ENCODE measurements at regions of chr2 and their contacts with region 1.

Region 1: DNA sequence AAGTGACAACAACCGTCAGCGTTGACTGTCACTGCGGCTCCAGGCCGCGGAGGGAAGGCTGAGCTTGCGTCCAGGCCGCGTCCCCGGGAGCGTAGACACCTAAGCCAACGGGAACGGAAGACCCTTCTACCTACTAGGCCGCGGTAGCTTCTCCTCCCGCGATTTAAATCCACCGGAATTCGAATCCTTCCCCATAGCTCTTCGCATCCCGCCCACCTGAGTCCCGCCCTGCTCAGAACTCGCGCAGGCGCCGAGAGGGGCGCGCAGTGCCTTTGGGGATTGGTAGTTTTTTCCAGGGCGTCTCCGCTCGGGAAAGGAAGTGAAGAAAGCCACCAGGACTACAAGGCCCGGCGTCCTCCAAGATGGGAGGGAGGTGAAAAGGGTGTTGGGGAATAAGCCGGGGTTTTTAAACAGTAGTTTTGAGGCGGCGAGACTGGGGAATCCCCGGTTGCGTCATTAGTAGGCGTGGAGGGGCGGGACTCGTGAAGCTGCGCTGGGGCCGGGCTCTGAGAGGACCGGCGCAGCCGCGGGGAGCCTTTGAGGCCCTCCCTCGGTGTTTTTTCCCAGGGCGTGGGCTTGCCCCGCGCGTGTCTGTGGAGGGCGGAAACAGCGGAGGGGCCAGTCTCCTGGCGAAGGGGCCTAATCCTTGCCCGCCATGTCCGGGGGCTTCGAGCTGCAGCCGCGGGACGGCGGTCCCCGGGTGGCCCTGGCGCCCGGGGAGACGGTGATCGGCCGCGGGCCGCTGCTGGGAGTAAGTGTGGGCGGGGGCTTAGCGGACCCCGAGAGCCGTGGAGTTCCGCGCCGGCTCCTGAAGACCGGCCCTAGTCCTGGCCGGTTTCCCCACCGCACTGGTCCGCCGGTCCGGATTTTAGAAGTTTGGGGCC is at the starts of genes APLF and FBXO48:
- DNase-seq: peak; percentile 100
- H3K4me3 Mint-ChIP-seq: peak within 1 kb of the TSS; percentile 96
- H3K27ac Mint-ChIP-seq: peak within 1 kb of the TSS; percentile 93
- H3K4me1 Mint-ChIP-seq: peaks cover 44% of the 10 kb centered on the region
- H3K27me3 Mint-ChIP-seq: no peaks in the 10 kb centered on the region
- total RNA-seq, gene APLF: 2.0 and 2.1 TPM in 2 replicates
- total RNA-seq, gene FBXO48: 1.2 TPM in 2 replicates

Region 2: DNA sequence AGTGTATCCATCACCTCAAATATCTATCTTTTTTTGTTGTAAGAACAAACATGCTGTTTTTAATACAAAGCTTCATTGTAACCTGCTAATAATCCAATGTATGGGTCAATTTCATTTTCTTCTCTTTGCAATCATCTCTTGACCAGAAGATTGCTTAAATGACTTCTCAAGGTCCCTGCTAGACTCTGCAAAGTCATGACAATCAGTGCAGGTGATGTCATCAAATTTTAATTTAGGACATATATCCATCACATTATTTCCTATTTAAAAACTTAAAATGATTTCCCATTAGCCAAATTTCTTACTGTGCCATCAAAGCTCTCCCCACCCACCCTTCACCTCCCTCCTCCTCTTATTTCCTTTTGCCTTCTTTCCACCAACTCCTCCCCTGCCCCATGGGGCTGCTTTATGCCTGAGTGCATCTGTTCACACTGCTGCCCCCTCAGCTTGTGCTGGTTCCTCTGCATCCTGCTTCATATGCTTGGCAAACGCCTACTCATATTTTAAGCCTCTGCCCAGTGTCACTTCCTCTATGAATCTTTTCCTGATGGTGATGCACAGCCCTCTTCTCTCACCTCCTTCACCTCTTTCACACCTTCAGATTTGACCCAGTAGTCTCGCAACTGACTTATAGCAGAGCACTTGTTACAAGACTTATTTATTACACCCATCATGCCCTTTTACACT is 82.0 kb before region 1 on chr2:
- intact Hi-C with region 1: loop called (anchors 1 kb)
- DNase-seq: peak; percentile 63
- H3K4me3 Mint-ChIP-seq: peak overlapping the region; percentile 10
- H3K27ac Mint-ChIP-seq: peak overlapping the region; percentile 45
- H3K4me1 Mint-ChIP-seq: peaks cover 38% of the 10 kb centered on the region
- H3K27me3 Mint-ChIP-seq: peaks cover 12% of the 10 kb centered on the region

Region 3: DNA sequence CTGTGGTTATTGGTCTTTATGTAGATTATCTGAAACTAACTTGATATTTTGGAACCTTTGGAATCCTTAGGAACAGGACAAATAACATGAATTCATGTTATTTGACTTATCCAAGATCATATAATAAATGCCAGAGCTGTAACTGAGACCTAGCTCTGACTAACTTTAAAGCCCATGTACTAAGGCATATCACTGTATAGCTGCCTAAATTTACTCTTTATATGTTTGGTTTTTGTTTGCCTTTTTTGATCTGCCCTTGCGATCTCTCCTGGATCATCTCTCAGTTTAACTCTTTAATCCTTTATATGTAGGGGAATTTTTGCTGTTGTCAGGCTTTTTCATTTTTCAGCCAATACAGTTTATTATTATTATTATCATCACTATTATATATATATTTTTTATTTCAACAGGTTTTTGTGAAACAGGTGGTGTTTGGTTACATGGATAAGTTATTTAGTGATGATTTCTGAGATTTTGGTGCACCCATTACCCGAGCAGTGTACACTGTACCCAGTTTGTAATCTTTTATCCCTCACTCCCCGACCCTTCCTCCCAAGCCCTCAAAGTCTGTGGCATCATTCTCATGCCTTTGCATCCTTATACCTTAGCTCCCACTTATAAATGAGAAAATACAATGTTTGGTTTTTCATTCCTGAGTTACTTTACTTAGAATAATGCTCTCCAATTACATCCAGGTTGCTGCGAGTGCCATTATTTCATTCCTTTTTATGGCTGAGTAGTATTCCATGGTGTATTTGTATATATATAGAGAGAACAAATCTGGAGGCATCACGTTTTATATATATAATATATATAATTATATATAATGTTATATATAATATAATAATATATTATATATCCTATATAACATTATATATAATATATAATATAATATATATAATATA is 49.0 kb after region 1 on chr2:
- intact Hi-C with region 1: loop called (anchors 5 kb)
- DNase-seq: no peak
- H3K4me3 Mint-ChIP-seq: no peak overlapping the region
- H3K27ac Mint-ChIP-seq: no peak overlapping the region
- H3K4me1 Mint-ChIP-seq: peaks cover 9% of the 10 kb centered on the region
- H3K27me3 Mint-ChIP-seq: no peaks in the 10 kb centered on the region

Region 4: DNA sequence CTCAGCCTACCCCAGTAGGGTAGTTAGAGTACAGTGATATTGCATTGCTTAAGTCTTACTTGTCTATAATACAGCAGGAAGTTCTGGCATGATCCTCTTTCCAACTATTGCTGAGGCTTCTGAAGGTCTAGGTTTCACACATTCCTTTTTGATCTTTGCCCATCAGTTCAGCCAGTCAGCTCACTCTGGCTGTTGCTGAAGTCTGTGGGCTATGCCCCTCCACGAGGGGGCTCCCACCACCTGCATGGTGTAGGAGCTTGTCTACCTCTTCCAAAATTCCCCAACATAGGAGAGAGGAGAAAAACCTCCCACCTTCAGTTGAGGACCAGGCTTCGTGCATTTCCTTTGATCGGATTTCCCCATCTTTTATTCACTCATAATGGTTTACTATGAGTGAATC is 202.3 kb after region 1 on chr2:
- intact Hi-C with region 1: no loop called
- DNase-seq: peak; percentile 45
- H3K4me3 Mint-ChIP-seq: no peak overlapping the region
- H3K27ac Mint-ChIP-seq: no peak overlapping the region
- H3K4me1 Mint-ChIP-seq: peaks cover 4% of the 10 kb centered on the region
- H3K27me3 Mint-ChIP-seq: peaks cover 40% of the 10 kb centered on the region

Region 5: DNA sequence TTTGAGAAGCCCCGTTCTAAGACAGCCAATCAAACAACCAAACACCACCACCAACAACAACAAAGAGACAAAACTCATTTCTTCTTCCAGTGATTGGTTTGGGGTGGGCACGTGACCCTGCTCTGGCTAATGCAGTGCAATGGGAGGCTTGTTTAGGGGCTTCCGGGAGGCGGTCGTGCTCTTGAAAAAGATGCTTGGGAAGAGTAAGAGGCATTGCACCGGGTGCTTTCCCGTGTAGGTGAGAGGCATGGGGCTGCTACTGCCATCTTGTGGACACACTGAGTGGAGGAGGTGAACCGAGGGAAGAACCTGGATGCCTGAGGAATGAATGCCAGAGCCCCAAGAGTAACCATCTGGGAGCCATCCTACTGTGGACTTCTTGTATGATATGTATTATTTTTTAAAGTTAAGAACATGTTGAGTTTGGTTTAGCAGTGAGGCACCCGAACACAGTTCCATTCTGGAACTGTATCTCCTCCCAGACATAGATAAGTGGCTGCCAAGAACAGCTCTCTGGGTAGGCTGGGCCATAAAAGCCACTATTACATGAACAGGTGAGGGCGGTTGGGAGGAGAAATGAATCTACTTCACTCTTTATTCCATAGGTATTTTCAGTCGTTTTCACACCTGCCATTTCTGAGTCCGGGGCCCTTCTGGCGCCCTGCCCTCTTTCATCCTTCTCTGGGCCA is 248.2 kb after region 1 on chr2:
- intact Hi-C with region 1: loop called (anchors 2 kb)
- DNase-seq: peak; percentile 75
- H3K4me3 Mint-ChIP-seq: peak overlapping the region; percentile 1
- H3K27ac Mint-ChIP-seq: peak overlapping the region; percentile 75
- H3K4me1 Mint-ChIP-seq: peaks cover 80% of the 10 kb centered on the region
- H3K27me3 Mint-ChIP-seq: no peaks in the 10 kb centered on the region

Region 6: GRCh38 chr2:68909793-68910674 is 442.7 kb after region 1 on chr2:
- intact Hi-C with region 1: loop called (anchors 2 kb)
- DNase-seq: peak; percentile 91
- H3K4me3 Mint-ChIP-seq: peak overlapping the region; percentile 13
- H3K27ac Mint-ChIP-seq: peak overlapping the region; percentile 67
- H3K4me1 Mint-ChIP-seq: peaks cover 35% of the 10 kb centered on the region
- H3K27me3 Mint-ChIP-seq: no peaks in the 10 kb centered on the region

Region 7: DNA sequence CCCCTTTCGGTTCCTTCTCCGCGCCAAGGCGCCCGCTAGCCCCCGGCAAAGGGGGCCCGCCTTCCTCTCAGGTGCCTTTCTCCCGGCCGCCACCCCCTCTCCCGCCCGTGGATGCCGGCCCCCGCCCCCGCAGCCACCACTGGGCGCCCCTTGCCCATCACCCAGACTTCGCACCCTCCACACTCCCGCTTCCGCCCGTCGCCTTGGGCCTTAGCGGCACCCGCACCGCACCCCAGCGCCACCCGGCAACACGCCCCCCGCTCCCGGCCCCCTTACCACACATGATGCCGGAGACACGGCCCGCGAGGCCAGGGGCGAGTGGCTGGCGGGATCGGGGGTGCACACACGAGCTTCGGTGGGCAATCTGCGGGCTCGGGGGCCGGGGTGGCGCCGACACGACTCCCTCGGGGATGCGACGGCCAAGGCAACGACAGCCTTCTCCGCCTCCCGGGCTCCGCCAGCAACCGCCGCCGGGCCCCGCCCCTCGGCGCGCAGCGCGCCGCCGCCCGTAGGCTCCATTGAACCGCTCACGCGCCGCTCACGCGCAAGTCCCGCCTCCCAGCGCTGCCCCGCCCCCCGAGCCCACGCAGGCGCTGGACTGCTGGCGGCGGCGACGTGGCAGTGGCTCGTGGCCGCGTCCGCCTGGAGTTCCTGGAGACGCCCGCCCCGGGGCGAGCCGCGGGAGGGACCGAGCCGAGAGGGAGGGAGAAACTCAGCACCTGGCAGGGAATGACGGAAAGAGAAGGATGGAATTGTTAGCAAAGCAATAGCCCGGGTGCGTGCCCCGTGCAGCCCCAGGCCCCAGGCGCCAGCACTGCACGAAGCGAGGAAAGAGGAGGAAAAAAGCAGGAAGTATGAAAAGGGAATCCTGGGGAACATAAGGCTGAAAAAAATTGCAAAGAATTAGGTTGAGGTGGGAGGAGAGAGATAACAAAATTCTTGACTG is 919.7 kb after region 1 on chr2 and contains the start of gene GFPT1:
- intact Hi-C with region 1: loop called (anchors 10 kb)
- DNase-seq: peak; percentile 99
- H3K4me3 Mint-ChIP-seq: peak within 1 kb of the TSS; percentile 98
- H3K27ac Mint-ChIP-seq: peak within 1 kb of the TSS; percentile 95
- H3K4me1 Mint-ChIP-seq: peaks cover 40% of the 10 kb centered on the region
- H3K27me3 Mint-ChIP-seq: no peaks in the 10 kb centered on the region
- total RNA-seq, gene GFPT1: 48.8 and 50.6 TPM in 2 replicates

Measured in activated CD4-positive, alpha-beta T cell treated with anti-CD3 and anti-CD28 coated beads, Interleukin-2, amount 10 ng/mL, durations not matched to agents 24 days and 14 days (primary cell).